ENCODE measurements at regions of chr3 and their contacts with region 1.

Region 1: GRCh38 chr3:194315088-194315964 is 35.8 kb downstream of the CPN2 start:
- DNase-seq: peak; percentile 30 to 89 (median 74)
- ATAC-seq: peak; percentile 87 to 91 (median 90)
- H3K4me3 ChIP-seq: peak overlapping the region; percentile 52 to 66
- H3K4me3 Mint-ChIP-seq: peak overlapping the region; percentile 69 to 85 (median 80)
- H3K27ac ChIP-seq: no peak overlapping the region
- H3K27ac Mint-ChIP-seq: no peak overlapping the region
- H3K4me1 ChIP-seq: peaks cover 2 to 17% of the 10 kb centered on the region in 2 experiments
- H3K4me1 Mint-ChIP-seq: peaks cover 12 to 17% (median 13%) of the 10 kb centered on the region in 3 donors
- H3K27me3 ChIP-seq: peaks cover 0 to 42% of the 10 kb centered on the region in 2 experiments
- H3K27me3 Mint-ChIP-seq: peaks cover 9 to 26% of the 10 kb centered on the region in 2 donors

Region 2: GRCh38 chr3:193530231-193531165 is 784.8 kb before region 1 on chr3:
- CTCF ChIA-PET with region 1: no interaction called
- POLR2A ChIA-PET with region 1: no interaction called
- DNase-seq: no peak
- ATAC-seq: no peak
- H3K4me3 ChIP-seq: no peak overlapping the region
- H3K4me3 Mint-ChIP-seq: no peak overlapping the region
- H3K27ac ChIP-seq: no peak overlapping the region
- H3K27ac Mint-ChIP-seq: no peak overlapping the region
- H3K4me1 ChIP-seq: no peaks in the 10 kb centered on the region
- H3K4me1 Mint-ChIP-seq: no peaks in the 10 kb centered on the region
- H3K27me3 ChIP-seq: no peaks in the 10 kb centered on the region
- H3K27me3 Mint-ChIP-seq: peaks cover 0 to 19% of the 10 kb centered on the region in 2 donors

Region 3: GRCh38 chr3:193665370-193665989 is 649.8 kb before region 1 on chr3:
- CTCF ChIA-PET with region 1: interaction called, 37 to 48 read pairs
- POLR2A ChIA-PET with region 1: no interaction called
- DNase-seq: peak in 1 of 35 experiments; percentile 49
- ATAC-seq: no peak
- H3K4me3 ChIP-seq: no peak overlapping the region
- H3K4me3 Mint-ChIP-seq: no peak overlapping the region
- H3K27ac ChIP-seq: no peak overlapping the region
- H3K27ac Mint-ChIP-seq: no peak overlapping the region
- H3K4me1 ChIP-seq: no peaks in the 10 kb centered on the region
- H3K4me1 Mint-ChIP-seq: no peaks in the 10 kb centered on the region
- H3K27me3 ChIP-seq: no peaks in the 10 kb centered on the region
- H3K27me3 Mint-ChIP-seq: no peaks in the 10 kb centered on the region

Region 4: DNA sequence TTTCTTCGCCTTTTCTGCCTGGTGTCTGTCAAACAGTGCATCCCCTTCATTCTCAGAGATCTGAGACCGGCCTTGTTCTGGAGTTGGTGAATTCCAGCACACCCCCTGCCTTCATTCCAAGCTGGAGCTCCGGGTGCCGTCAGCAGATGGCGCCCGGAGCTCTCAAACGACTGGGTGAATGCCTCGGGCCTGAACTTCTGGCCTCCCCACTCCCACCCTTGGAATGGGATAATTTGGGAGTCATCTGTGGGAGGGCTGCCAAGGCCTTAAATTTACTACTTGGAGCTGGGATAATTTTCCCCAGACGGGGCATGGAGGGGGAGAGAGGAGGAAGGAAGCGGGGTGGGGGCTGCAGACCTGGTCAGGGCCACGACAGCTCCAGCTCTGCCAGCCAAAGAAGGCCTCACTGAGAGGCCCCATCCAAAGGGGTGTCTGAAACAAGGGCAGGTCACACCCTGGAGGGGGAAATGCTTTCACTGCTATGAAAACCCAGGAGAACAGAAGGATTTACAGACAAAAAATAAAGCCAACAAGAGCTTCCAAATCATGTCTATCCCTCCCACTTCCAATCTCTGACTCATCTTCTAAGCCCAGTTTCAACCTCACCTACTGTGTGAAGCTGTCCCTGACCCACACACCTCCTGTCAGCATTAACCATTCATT is 534.4 kb before region 1 on chr3:
- CTCF ChIA-PET with region 1: interaction called, 12 to 15 read pairs
- POLR2A ChIA-PET with region 1: no interaction called
- DNase-seq: peak in 10 of 35 experiments; percentile 5 to 47 (median 16)
- ATAC-seq: peak in 1 of 4 experiments; percentile 32
- H3K4me3 ChIP-seq: no peak overlapping the region
- H3K4me3 Mint-ChIP-seq: no peak overlapping the region
- H3K27ac ChIP-seq: no peak overlapping the region
- H3K27ac Mint-ChIP-seq: no peak overlapping the region
- H3K4me1 ChIP-seq: peaks cover 0 to 6% of the 10 kb centered on the region in 2 experiments
- H3K4me1 Mint-ChIP-seq: peaks cover 8 to 10% (median 10%) of the 10 kb centered on the region in 3 donors
- H3K27me3 ChIP-seq: peaks cover 2 to 27% of the 10 kb centered on the region in 2 experiments
- H3K27me3 Mint-ChIP-seq: peaks cover 34 to 47% of the 10 kb centered on the region in 2 donors

Region 5: DNA sequence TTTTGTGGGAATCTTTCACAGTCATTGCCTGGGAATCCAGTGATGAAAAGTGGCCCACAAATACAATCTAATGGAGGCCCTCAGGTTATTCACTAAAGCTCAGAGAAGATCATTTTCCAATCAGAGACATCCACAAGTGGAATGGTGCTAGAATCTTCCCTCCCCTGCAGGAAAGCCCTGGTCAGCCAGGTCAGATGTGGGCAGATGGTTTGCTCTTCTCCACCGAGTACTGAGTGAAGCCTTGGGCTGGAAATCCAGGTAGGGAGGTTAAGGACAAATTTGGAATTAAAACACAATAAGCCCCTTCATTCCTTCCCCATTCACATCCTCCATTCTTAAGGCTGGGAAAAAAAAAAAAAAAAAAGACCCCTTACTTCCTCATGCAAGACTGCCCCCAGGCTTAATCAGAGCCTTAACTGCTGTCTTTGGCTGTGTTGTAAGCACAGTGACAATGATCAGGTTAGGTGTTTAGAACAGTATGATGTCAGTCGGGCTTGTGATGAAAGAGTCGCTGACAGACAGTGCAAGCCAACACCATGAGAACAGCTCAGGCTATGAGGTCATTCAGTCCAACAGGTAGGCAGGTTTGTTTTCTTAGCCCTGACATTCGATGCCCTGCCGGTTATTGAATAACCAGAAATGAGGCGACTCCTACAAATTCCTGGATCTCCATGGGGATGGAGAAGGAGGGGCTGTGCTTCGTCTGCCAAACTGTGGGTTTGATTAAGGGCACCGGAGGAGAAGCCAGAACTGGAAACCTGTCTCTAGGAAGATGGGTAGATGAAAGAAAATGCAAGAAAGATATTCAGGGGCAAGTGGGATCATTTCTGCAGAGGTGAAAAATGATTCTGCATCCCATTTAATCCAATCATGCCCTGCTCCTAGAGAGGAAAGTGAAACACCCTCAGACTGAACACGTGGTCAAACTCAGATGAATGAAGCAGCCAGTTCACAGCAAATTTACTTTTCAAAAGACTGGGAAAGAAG is 202.9 kb before region 1 on chr3:
- CTCF ChIA-PET with region 1: no interaction called
- POLR2A ChIA-PET with region 1: no interaction called
- DNase-seq: no peak
- ATAC-seq: no peak
- H3K4me3 ChIP-seq: no peak overlapping the region
- H3K4me3 Mint-ChIP-seq: no peak overlapping the region
- H3K27ac ChIP-seq: no peak overlapping the region
- H3K27ac Mint-ChIP-seq: no peak overlapping the region
- H3K4me1 ChIP-seq: no peaks in the 10 kb centered on the region
- H3K4me1 Mint-ChIP-seq: no peaks in the 10 kb centered on the region
- H3K27me3 ChIP-seq: peaks cover 0 to 11% of the 10 kb centered on the region in 2 experiments
- H3K27me3 Mint-ChIP-seq: peaks cover 11 to 12% of the 10 kb centered on the region in 2 donors

Region 6: GRCh38 chr3:195421393-195421792 is 1106.1 kb after region 1 on chr3:
- CTCF ChIA-PET with region 1: interaction called in 1 of 2 experiments, 11 read pairs
- POLR2A ChIA-PET with region 1: no interaction called
- DNase-seq: no peak
- ATAC-seq: no peak
- H3K4me3 ChIP-seq: no peak overlapping the region
- H3K4me3 Mint-ChIP-seq: no peak overlapping the region
- H3K27ac ChIP-seq: no peak overlapping the region
- H3K27ac Mint-ChIP-seq: no peak overlapping the region
- H3K4me1 ChIP-seq: peaks cover 8 to 17% of the 10 kb centered on the region in 2 experiments
- H3K4me1 Mint-ChIP-seq: peaks cover 63 to 69% (median 69%) of the 10 kb centered on the region in 3 donors
- H3K27me3 ChIP-seq: no peaks in the 10 kb centered on the region
- H3K27me3 Mint-ChIP-seq: no peaks in the 10 kb centered on the region

Measured in T-cell (primary cell).